Activated B cell treated with CpG ODN at 0.5 μM for 24 hours (primary cell): ENCODE measurements at regions of chr16 and their contacts with region 1.

Region 1: GRCh38 chr16:17377360-17378324 is 93.1 kb downstream of the XYLT1 start:
- DNase-seq: no peak
- ATAC-seq: peak; percentile 85
- H3K4me3 Mint-ChIP-seq: peak overlapping the region; percentile 56
- H3K27ac Mint-ChIP-seq: peak overlapping the region; percentile 88
- H3K4me1 Mint-ChIP-seq: peaks cover 78% of the 10 kb centered on the region
- H3K27me3 Mint-ChIP-seq: no peaks in the 10 kb centered on the region
- CTCF ChIP-seq: no peak

Region 2: GRCh38 chr16:17070882-17071592 is 306.6 kb before region 1 on chr16:
- CTCF ChIA-PET with region 1: no interaction called
- POLR2A ChIA-PET with region 1: no interaction called
- intact Hi-C with region 1: loop called (anchors 5 kb)
- DNase-seq: peak; percentile 67
- ATAC-seq: peak; percentile 82
- H3K4me3 Mint-ChIP-seq: peak overlapping the region; percentile 88
- H3K27ac Mint-ChIP-seq: peak overlapping the region; percentile 98
- H3K4me1 Mint-ChIP-seq: peaks cover 59% of the 10 kb centered on the region
- H3K27me3 Mint-ChIP-seq: no peaks in the 10 kb centered on the region
- CTCF ChIP-seq: no peak

Region 3: DNA sequence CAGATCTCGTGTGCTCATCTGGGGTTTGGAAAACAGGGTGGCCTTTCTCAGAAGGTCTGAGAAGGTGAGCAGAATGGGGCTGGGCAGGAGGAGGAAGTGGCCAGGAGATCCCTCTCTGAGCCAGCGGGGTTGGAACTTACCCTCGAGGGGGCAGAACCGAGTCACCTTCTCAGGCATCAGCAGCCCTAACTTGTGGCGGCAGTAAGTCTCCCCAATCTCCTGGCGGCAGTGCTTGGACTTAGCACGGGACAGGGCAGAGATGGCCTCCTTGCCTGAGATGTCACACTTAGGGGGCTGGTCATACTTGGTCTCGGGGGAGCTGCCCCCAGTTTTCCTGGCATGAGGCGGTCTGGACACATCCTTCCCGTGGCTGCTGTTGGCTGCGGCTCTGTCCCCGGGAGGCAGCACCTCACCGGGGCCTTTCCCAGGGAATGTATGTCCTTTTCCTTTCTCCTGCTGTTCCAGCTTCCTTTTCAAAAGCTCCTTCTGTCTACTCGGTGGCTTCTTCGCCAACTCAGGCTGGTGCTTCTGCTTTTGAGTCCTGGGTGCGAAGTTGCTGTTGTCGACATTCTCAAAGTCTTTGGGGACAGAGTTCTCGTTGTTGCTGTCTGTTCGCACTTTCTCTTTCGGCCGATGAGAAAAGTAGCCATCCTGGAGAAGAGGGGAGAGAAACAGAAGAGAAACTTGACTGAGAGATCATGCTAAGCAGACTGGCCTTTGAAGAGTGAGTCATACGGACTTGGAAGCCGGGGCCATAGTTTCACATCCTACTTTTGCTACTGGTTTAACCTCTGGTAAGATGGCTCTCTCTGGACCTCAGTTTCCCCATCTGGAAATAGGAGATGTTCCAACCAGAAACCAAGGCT is 118.6 kb before region 1 on chr16:
- CTCF ChIA-PET with region 1: no interaction called
- POLR2A ChIA-PET with region 1: interaction called, 3 read pairs
- intact Hi-C with region 1: loop called (anchors 5 kb)
- DNase-seq: no peak
- ATAC-seq: peak; percentile 83
- H3K4me3 Mint-ChIP-seq: peak overlapping the region; percentile 79
- H3K27ac Mint-ChIP-seq: peak overlapping the region; percentile 91
- H3K4me1 Mint-ChIP-seq: peaks cover 38% of the 10 kb centered on the region
- H3K27me3 Mint-ChIP-seq: no peaks in the 10 kb centered on the region
- CTCF ChIP-seq: no peak

Region 4: DNA sequence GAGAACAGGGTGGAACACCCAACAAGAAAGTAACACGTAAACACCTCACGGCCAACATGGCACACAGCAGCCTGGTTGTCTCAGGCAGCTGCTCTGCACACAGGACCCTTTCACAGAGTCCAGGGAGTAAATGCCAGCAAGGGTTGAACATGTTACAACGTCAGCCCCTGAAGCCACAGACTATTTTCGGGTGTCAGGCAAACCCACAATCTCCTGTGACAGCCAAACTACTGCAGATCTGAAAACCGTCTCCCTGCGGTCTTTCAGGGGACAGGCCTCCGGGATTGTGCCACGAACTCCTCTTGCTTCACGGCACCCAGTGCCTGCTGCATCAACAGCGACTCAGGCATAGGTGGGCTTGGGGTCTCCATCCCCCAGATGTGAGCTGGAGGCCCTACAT is 34.6 kb before region 1 on chr16:
- CTCF ChIA-PET with region 1: no interaction called
- POLR2A ChIA-PET with region 1: interaction called, 3 read pairs
- intact Hi-C with region 1: loop called (anchors 1 kb)
- DNase-seq: no peak
- ATAC-seq: peak; percentile 48
- H3K4me3 Mint-ChIP-seq: peak overlapping the region; percentile 57
- H3K27ac Mint-ChIP-seq: peak overlapping the region; percentile 62
- H3K4me1 Mint-ChIP-seq: peaks cover 72% of the 10 kb centered on the region
- H3K27me3 Mint-ChIP-seq: no peaks in the 10 kb centered on the region
- CTCF ChIP-seq: no peak

Region 5: GRCh38 chr16:17408955-17409441 is 31.4 kb after region 1 on chr16:
- CTCF ChIA-PET with region 1: interaction called, 3 read pairs
- POLR2A ChIA-PET with region 1: interaction called, 31 read pairs
- intact Hi-C with region 1: no loop called
- DNase-seq: no peak
- ATAC-seq: peak; percentile 72
- H3K4me3 Mint-ChIP-seq: peak overlapping the region; percentile 75
- H3K27ac Mint-ChIP-seq: peak overlapping the region; percentile 94
- H3K4me1 Mint-ChIP-seq: peaks cover 63% of the 10 kb centered on the region
- H3K27me3 Mint-ChIP-seq: no peaks in the 10 kb centered on the region
- CTCF ChIP-seq: no peak

Region 6: GRCh38 chr16:17467923-17468540 is 90.4 kb after region 1 on chr16:
- CTCF ChIA-PET with region 1: interaction called, 4 read pairs
- POLR2A ChIA-PET with region 1: interaction called, 7 read pairs
- intact Hi-C with region 1: loop called (anchors 2 kb)
- DNase-seq: no peak
- ATAC-seq: no peak
- H3K4me3 Mint-ChIP-seq: peak overlapping the region; percentile 83
- H3K27ac Mint-ChIP-seq: no peak overlapping the region
- H3K4me1 Mint-ChIP-seq: peaks cover 54% of the 10 kb centered on the region
- H3K27me3 Mint-ChIP-seq: no peaks in the 10 kb centered on the region
- CTCF ChIP-seq: no peak